AG04449 (cell line): ENCODE measurements at regions of chr15 and their contacts with region 1.

Region 1: GRCh38 chr15:39580117-39580484 is 778 bp upstream of the THBS1 start:
- DNase-seq: peak; percentile 98
- H3K4me3 ChIP-seq: peak overlapping the region; percentile 95
- CTCF ChIP-seq: peak; percentile 93

Region 2: GRCh38 chr15:38714309-38715072 is 865.6 kb before region 1 on chr15:
- CTCF ChIA-PET with region 1: no interaction called
- POLR2A ChIA-PET with region 1: interaction called, 13 read pairs
- DNase-seq: peak; percentile 99
- H3K4me3 ChIP-seq: no peak overlapping the region
- CTCF ChIP-seq: no peak

Region 3: GRCh38 chr15:39180483-39180933 is 399.6 kb before region 1 on chr15:
- CTCF ChIA-PET with region 1: interaction called, 16 read pairs
- POLR2A ChIA-PET with region 1: interaction called, 42 read pairs
- DNase-seq: no peak
- H3K4me3 ChIP-seq: no peak overlapping the region
- CTCF ChIP-seq: no peak

Region 4: GRCh38 chr15:39235092-39235795 is 344.9 kb before region 1 on chr15:
- CTCF ChIA-PET with region 1: no interaction called
- POLR2A ChIA-PET with region 1: interaction called, 11 read pairs
- DNase-seq: no peak
- H3K4me3 ChIP-seq: no peak overlapping the region
- CTCF ChIP-seq: no peak

Region 5: DNA sequence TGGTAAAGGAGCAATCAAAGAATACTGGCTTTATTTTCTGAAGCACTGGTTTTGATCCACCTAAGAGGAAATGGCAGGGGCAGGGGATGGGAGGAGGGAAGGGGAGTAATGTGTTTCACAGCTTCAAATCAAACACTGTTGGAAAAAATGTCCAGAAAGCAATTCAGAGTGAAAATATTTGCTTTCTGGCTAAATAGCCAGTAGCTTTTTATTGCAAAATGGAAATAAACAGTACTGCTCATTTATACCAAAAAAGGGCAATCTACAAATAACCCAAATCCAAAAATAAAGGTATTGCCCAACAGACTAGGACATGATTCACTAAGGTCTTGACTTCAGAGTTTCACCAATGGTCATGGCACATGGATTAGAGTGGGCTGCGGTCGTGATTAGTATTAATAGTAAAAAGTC is 278.5 kb before region 1 on chr15:
- CTCF ChIA-PET with region 1: interaction called, 51 read pairs
- POLR2A ChIA-PET with region 1: interaction called, 133 read pairs
- DNase-seq: peak; percentile 77
- H3K4me3 ChIP-seq: no peak overlapping the region
- CTCF ChIP-seq: no peak

Region 6: DNA sequence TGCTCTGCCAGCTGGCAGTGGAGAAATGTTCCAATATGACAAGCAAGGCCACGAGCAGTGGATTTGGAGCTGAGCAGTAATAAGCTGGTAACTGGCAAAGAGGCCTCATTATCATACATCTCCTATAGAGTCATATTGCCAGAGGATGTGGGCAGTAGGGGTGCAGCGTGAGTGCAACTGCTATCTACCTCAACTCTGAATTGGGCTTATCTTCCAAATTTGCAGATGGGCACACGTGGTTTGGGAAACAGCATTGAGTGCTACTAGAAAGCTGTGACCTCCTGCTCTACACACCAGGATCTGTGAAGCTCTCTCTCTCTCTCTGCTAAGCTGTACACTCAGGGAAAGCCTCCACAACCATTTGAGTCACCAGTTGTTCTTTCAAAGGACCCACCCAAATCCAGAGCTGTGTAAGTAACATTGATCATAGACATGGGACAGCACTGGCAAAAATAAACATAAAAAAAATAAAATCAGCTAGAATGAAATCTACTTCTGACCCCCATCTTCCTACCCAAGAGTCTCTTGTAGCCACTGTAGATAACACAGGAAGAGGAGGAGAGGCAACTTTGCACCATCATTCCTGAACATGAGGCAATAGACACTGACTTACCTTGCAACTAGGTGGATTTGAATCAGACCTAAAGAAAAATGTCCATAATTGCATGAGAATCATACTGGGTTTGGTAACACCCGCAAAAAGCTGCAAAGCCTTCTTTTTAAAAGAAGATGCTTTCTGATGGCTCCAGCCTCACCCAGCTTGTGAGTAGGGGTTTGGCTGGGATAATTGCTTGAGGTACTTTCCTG is 82.1 kb before region 1 on chr15:
- CTCF ChIA-PET with region 1: interaction called, 5 read pairs
- POLR2A ChIA-PET with region 1: interaction called, 14 read pairs
- DNase-seq: no peak
- H3K4me3 ChIP-seq: no peak overlapping the region
- CTCF ChIP-seq: no peak

Region 7: DNA sequence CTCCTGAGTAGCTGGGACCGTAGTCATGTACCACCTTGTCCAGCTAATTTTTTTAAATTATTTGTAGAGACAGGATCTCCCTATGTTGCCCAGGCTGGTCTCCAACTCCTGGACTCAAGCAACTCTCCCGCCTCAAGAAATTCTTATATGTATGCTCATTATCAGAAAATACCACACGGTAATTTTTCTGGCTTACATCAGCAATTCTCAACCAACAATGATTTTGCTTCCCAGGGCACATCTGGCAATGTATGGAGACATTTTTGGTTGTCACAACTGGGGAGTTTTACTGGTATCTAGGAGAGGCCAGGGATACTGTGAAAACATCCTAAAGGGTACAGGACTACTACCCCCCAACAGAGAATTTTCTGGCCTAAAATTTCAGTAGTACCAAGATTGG is 448.1 kb after region 1 on chr15:
- CTCF ChIA-PET with region 1: no interaction called
- POLR2A ChIA-PET with region 1: no interaction called
- DNase-seq: no peak
- H3K4me3 ChIP-seq: no peak overlapping the region
- CTCF ChIP-seq: no peak